ENCODE measurements at regions of chr21 and their contacts with region 1.

Region 1: GRCh38 chr21:32653311-32653901 is 41.2 kb upstream of the CFAP298 start:
- DNase-seq: peak in 2 of 6 donors; percentile 6 to 46
- ATAC-seq: peak; percentile 71 to 98 (median 90)
- H3K4me3 ChIP-seq: no peak overlapping the region
- H3K27ac ChIP-seq: no peak overlapping the region
- H3K4me1 ChIP-seq: no peaks in the 10 kb centered on the region
- H3K27me3 ChIP-seq: no peaks in the 10 kb centered on the region
- CTCF ChIP-seq: peak; percentile 23 to 54 (median 38)

Region 2: GRCh38 chr21:32592929-32593502 is 60.4 kb before region 1 on chr21:
- intact Hi-C with region 1: no loop called
- DNase-seq: no peak
- ATAC-seq: peak in 2 of 4 donors; percentile 12 to 40
- H3K4me3 ChIP-seq: no peak overlapping the region
- H3K27ac ChIP-seq: no peak overlapping the region
- H3K4me1 ChIP-seq: no peaks in the 10 kb centered on the region
- H3K27me3 ChIP-seq: no peaks in the 10 kb centered on the region
- CTCF ChIP-seq: no peak

Region 3: GRCh38 chr21:32753818-32754610 is 100.6 kb after region 1 on chr21:
- intact Hi-C with region 1: no loop called
- DNase-seq: no peak
- ATAC-seq: no peak
- H3K4me3 ChIP-seq: no peak overlapping the region
- H3K27ac ChIP-seq: no peak overlapping the region
- H3K4me1 ChIP-seq: no peaks in the 10 kb centered on the region
- H3K27me3 ChIP-seq: no peaks in the 10 kb centered on the region
- CTCF ChIP-seq: no peak

Region 4: GRCh38 chr21:32819694-32820093 is 166.3 kb after region 1 on chr21:
- intact Hi-C with region 1: loop called in 1 of 3 experiments (anchors 10 kb)
- DNase-seq: no peak
- ATAC-seq: peak in 2 of 4 donors; percentile 23 to 33
- H3K4me3 ChIP-seq: no peak overlapping the region
- H3K27ac ChIP-seq: no peak overlapping the region
- H3K4me1 ChIP-seq: peaks cover 5 to 18% (median 7%) of the 10 kb centered on the region in 3 donors
- H3K27me3 ChIP-seq: no peaks in the 10 kb centered on the region
- CTCF ChIP-seq: no peak

Measured in pancreas (tissue), 10 donors.